Naive thymus-derived CD4-positive, alpha-beta T cell (primary cell): ENCODE measurements at regions of chrX and their contacts with region 1.

Region 1: DNA sequence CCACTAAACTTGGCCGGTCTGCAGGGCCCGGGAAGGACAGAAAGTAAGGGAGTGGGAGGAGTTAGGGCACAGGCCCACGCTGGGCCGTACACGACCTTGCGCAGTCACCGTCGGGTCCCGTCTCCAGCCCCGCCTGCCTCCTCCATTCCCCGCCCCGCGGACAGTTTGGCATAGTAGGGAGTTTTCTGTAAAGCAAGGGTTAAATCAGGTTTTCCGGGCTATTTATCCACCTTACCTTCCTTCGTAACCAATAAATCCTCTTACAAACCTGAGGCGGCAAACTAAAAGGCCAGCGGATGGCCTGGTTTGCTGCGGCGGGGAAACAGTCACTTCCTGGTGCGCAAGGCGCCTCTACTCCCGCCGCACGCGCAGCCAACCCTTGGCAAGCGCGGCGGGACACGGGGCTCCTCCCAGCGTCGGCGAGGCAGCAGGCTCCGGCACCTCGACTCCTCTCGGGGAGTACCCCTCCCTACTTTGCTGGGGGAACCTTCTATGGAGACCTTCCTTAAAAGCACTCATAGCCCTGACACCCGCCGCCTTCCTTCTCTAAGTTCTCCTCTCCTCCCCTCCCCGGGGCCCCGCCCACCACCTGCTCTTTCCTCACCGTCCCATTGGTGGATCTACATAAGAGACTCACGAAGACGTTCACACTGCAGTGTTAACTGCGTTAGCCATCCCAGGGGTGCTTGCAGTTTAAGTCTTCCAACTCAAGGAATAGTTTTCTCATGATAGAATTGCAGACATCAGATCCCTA is at the start of gene TRMT2B:
- DNase-seq: peak; percentile 47 to 87 (median 80)
- ATAC-seq: peak; percentile 92
- H3K4me3 ChIP-seq: peak within 1 kb of the TSS; percentile 81
- H3K4me3 Mint-ChIP-seq: peak within 1 kb of the TSS; percentile 78 to 94 (median 92)
- H3K27ac ChIP-seq: peak within 1 kb of the TSS; percentile 93
- H3K27ac Mint-ChIP-seq: peak within 1 kb of the TSS; percentile 95 to 98 (median 97)
- H3K4me1 ChIP-seq: peaks cover 4% of the 10 kb centered on the region in 2 donors
- H3K4me1 Mint-ChIP-seq: peaks cover 12 to 43% (median 22%) of the 10 kb centered on the region in 7 donors
- H3K27me3 ChIP-seq: no peaks in the 10 kb centered on the region
- H3K27me3 Mint-ChIP-seq: no peaks in the 10 kb centered on the region
- total RNA-seq, gene TRMT2B: 25.5 to 51.1 (median 41.4) TPM

Region 2: GRCh38 chrX:100829730-100830129 is 222.0 kb before region 1 on chrX:
- CTCF ChIA-PET with region 1: no interaction called
- POLR2A ChIA-PET with region 1: no interaction called
- intact Hi-C with region 1: loop called in 1 of 2 experiments (anchors 2 kb)
- DNase-seq: peak in 4 of 9 donors; percentile 9 to 19 (median 13)
- ATAC-seq: peak; percentile 80
- H3K4me3 ChIP-seq: no peak overlapping the region
- H3K4me3 Mint-ChIP-seq: peak overlapping the region in 9 of 10 donors; percentile 23 to 81 (median 48)
- H3K27ac ChIP-seq: peak overlapping the region; percentile 46
- H3K27ac Mint-ChIP-seq: peak overlapping the region in 8 of 9 donors; percentile 62 to 99 (median 84)
- H3K4me1 ChIP-seq: no peaks in the 10 kb centered on the region
- H3K4me1 Mint-ChIP-seq: peaks cover 8 to 30% (median 13%) of the 10 kb centered on the region in 7 donors
- H3K27me3 ChIP-seq: no peaks in the 10 kb centered on the region
- H3K27me3 Mint-ChIP-seq: no peaks in the 10 kb centered on the region

Region 3: DNA sequence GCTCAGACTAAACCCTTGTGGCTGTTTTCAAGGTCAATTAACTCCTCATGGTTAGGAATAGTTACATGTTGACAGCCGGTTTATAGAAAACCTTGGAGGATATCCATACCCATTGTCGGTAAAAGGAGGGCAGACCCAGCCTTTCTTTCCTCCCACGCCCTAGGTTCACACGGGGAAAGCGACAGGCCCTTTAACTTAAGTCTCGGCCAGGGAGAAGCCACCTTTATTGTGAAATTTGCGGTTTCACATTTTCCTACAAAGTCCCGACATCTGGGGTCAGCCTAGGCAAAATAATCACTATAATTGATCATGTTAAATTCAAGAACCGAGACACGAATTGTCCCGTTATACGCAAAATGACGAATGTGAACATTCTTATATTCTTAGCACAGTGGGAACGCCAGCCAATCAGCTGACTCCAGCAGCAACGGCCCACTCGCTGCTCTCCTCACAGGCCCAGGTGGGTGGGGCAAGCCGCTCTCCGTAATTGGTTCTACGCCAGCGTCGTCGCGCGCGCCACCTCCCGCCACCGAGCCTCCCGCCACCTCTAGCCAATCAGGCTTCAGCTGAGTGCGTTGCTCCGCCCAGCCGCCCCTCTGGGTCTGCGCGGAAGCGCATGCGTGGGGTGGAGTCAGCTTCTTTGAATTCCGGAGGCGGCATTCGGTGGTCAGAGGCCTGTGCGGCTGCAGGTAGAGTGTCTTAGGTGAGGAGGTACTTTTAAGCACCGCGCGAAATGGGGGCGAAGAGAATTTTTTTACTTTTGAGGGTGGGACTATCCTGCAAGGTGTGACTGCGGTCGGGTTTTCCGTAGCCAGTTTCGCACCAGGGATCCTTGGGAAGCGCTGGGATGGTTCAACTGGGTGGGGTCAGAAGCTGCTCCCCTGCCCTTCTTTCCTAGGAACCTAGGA is 46.1 kb after region 1 on chrX and contains the start of gene CENPI:
- CTCF ChIA-PET with region 1: no interaction called
- POLR2A ChIA-PET with region 1: no interaction called
- intact Hi-C with region 1: loop called (anchors 1 kb)
- DNase-seq: peak; percentile 84 to 95 (median 93)
- ATAC-seq: peak; percentile 100
- H3K4me3 ChIP-seq: peak within 1 kb of the TSS; percentile 70
- H3K4me3 Mint-ChIP-seq: peak within 1 kb of the TSS; percentile 69 to 95 (median 90)
- H3K27ac ChIP-seq: peak within 1 kb of the TSS; percentile 84
- H3K27ac Mint-ChIP-seq: peak within 1 kb of the TSS; percentile 83 to 99 (median 93)
- H3K4me1 ChIP-seq: peaks cover 0 to 3% of the 10 kb centered on the region in 2 donors
- H3K4me1 Mint-ChIP-seq: peaks cover 0 to 28% (median 9%) of the 10 kb centered on the region in 7 donors
- H3K27me3 ChIP-seq: no peaks in the 10 kb centered on the region
- H3K27me3 Mint-ChIP-seq: no peaks in the 10 kb centered on the region
- total RNA-seq, gene CENPI: 0.24 to 18.4 (median 0.88) TPM

Region 4: GRCh38 chrX:101390664-101391525 is 339.2 kb after region 1 on chrX and contains the start of gene RPL36A:
- CTCF ChIA-PET with region 1: no interaction called
- POLR2A ChIA-PET with region 1: no interaction called
- intact Hi-C with region 1: loop called in 1 of 2 experiments (anchors 1 kb)
- DNase-seq: peak; percentile 41 to 75 (median 66)
- ATAC-seq: peak; percentile 97
- H3K4me3 ChIP-seq: peak within 1 kb of the TSS; percentile 66
- H3K4me3 Mint-ChIP-seq: peak within 1 kb of the TSS; percentile 81 to 96 (median 90)
- H3K27ac ChIP-seq: peak within 1 kb of the TSS; percentile 80
- H3K27ac Mint-ChIP-seq: peak within 1 kb of the TSS; percentile 80 to 97 (median 94)
- H3K4me1 ChIP-seq: peaks cover 4 to 5% of the 10 kb centered on the region in 2 donors
- H3K4me1 Mint-ChIP-seq: peaks cover 0 to 35% (median 18%) of the 10 kb centered on the region in 7 donors
- H3K27me3 ChIP-seq: no peaks in the 10 kb centered on the region
- H3K27me3 Mint-ChIP-seq: no peaks in the 10 kb centered on the region
- total RNA-seq, gene RPL36A: 113 to 342 (median 282) TPM